Naive thymus-derived CD4-positive, alpha-beta T cell (primary cell): ENCODE measurements at regions of chr3 and their contacts with region 1.

Region 1: GRCh38 chr3:122514123-122515019 is at the start of gene KPNA1:
- DNase-seq: peak; percentile 81 to 92 (median 90)
- ATAC-seq: peak; percentile 92
- H3K4me3 ChIP-seq: peak within 1 kb of the TSS; percentile 80
- H3K4me3 Mint-ChIP-seq: peak within 1 kb of the TSS; percentile 77 to 100 (median 92)
- H3K27ac ChIP-seq: peak within 1 kb of the TSS; percentile 100
- H3K27ac Mint-ChIP-seq: peak within 1 kb of the TSS; percentile 78 to 97 (median 91)
- H3K4me1 ChIP-seq: peaks cover 6 to 21% of the 10 kb centered on the region in 2 donors
- H3K4me1 Mint-ChIP-seq: peaks cover 35 to 52% (median 46%) of the 10 kb centered on the region in 7 donors
- H3K27me3 ChIP-seq: no peaks in the 10 kb centered on the region
- H3K27me3 Mint-ChIP-seq: no peaks in the 10 kb centered on the region
- total RNA-seq, gene KPNA1: 50.6 to 70.2 (median 54.3) TPM

Region 2: DNA sequence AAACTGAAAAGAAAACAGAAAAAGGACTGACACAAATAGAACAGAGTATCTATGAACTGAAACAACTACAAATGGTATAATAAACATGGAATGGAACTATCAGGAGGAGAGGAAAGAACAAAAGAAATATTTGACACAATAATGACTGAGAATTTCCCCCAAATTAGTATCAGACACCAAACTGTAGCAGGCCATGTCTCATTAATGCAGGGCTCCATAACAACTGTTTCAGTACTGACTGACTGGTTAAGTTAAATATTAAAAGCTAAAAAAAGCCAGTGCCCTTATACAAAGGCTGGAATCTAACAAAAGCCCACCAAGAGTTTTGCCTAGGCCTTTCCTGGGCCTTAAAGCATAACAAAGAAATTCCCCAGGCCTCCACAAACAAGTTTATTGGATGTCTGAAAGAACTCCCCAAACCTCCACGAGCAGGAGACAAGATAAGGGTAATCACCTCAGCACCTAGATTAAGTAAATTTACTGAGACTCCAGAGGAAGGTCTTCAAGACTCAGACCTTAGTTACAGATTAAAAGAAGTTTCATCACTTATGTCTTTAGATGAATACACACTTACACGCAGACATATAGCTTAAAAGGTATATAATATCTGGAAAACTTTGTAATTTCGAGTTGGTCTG is 45.4 kb before region 1 on chr3:
- CTCF ChIA-PET with region 1: no interaction called
- POLR2A ChIA-PET with region 1: no interaction called
- intact Hi-C with region 1: loop called in 1 of 2 experiments (anchors 10 kb)
- DNase-seq: no peak
- ATAC-seq: no peak
- H3K4me3 ChIP-seq: no peak overlapping the region
- H3K4me3 Mint-ChIP-seq: peak overlapping the region in 6 of 10 donors; percentile 22 to 55 (median 42)
- H3K27ac ChIP-seq: no peak overlapping the region
- H3K27ac Mint-ChIP-seq: peak overlapping the region in 7 of 9 donors; percentile 18 to 89 (median 56)
- H3K4me1 ChIP-seq: peaks cover 7 to 25% of the 10 kb centered on the region in 2 donors
- H3K4me1 Mint-ChIP-seq: peaks cover 31 to 68% (median 63%) of the 10 kb centered on the region in 7 donors
- H3K27me3 ChIP-seq: no peaks in the 10 kb centered on the region
- H3K27me3 Mint-ChIP-seq: no peaks in the 10 kb centered on the region

Region 3: DNA sequence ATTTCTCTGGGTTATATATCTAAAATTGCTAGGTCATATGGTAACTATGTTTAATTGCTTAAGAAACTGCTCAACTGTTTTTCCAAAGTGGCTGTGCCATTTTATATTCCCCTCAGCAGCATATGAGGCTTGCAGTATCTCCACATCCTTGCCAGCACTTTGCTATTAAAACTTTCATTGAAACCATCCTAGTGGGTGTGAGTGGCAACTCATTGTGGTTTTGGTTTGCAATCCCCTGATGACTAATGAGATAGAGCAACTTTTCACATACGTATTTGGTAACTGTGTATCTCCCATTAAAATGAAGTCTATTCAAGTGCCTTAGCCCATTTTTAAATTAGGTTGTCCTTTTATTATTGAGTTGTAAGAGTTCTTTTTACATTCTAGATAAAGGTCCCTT is 16.9 kb before region 1 on chr3:
- CTCF ChIA-PET with region 1: no interaction called
- POLR2A ChIA-PET with region 1: interaction called, 5 read pairs
- intact Hi-C with region 1: loop called (anchors 2 kb)
- DNase-seq: peak in 1 of 9 donors; percentile 40
- ATAC-seq: peak; percentile 90
- H3K4me3 ChIP-seq: no peak overlapping the region
- H3K4me3 Mint-ChIP-seq: no peak overlapping the region
- H3K27ac ChIP-seq: no peak overlapping the region
- H3K27ac Mint-ChIP-seq: peak overlapping the region in 1 of 9 donors; percentile 13
- H3K4me1 ChIP-seq: peaks cover 8 to 22% of the 10 kb centered on the region in 2 donors
- H3K4me1 Mint-ChIP-seq: peaks cover 22 to 69% (median 49%) of the 10 kb centered on the region in 7 donors
- H3K27me3 ChIP-seq: no peaks in the 10 kb centered on the region
- H3K27me3 Mint-ChIP-seq: no peaks in the 10 kb centered on the region

Region 4: DNA sequence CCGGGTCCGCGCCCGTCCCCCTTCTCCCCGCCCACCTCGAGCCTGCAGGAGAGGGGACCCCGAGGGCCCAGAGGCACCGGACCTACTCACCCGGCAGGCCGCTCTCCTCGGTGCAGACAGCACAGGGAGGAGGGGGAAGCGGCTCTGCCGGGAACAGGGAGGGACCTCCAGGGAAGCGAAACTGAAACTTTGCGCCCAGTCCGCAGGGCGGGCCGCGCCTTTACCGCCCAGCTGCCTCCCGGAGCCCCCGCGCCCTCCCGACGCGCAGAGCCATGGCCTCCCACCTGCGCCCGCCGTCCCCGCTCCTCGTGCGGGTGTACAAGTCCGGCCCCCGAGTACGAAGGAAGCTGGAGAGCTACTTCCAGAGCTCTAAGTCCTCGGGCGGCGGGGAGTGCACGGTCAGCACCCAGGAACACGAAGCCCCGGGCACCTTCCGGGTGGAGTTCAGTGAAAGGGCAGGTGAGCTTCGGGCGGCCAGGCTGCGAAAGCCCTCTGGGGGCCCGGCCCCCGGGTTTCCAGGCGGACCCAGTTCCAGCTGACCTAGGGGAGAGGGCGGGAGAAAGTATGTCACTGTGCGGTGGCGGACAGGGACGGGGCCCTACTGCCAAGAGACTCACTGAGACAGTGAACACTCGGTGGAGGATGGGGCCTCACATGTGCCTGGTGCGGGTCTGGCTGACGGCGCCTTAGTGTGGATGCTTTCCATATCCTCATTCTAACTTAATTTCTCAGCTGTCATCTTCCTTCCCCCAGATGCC is 50.0 kb after region 1 on chr3 and contains the starts of genes DTX3L and PARP9:
- CTCF ChIA-PET with region 1: no interaction called
- POLR2A ChIA-PET with region 1: interaction called, 5 read pairs
- intact Hi-C with region 1: loop called (anchors 2 kb)
- DNase-seq: peak; percentile 50 to 82 (median 77)
- ATAC-seq: peak; percentile 95
- H3K4me3 ChIP-seq: peak within 1 kb of the TSS; percentile 75
- H3K4me3 Mint-ChIP-seq: peak within 1 kb of the TSS; percentile 88 to 100 (median 98)
- H3K27ac ChIP-seq: peak within 1 kb of the TSS; percentile 98
- H3K27ac Mint-ChIP-seq: peak within 1 kb of the TSS; percentile 97 to 99 (median 98)
- H3K4me1 ChIP-seq: peaks cover 34 to 45% of the 10 kb centered on the region in 2 donors
- H3K4me1 Mint-ChIP-seq: peaks cover 58 to 91% (median 79%) of the 10 kb centered on the region in 7 donors
- H3K27me3 ChIP-seq: no peaks in the 10 kb centered on the region
- H3K27me3 Mint-ChIP-seq: no peaks in the 10 kb centered on the region
- total RNA-seq, gene DTX3L: 28.6 to 164 (median 35.8) TPM
- total RNA-seq, gene PARP9: 17.6 to 165 (median 24.4) TPM

Region 5: DNA sequence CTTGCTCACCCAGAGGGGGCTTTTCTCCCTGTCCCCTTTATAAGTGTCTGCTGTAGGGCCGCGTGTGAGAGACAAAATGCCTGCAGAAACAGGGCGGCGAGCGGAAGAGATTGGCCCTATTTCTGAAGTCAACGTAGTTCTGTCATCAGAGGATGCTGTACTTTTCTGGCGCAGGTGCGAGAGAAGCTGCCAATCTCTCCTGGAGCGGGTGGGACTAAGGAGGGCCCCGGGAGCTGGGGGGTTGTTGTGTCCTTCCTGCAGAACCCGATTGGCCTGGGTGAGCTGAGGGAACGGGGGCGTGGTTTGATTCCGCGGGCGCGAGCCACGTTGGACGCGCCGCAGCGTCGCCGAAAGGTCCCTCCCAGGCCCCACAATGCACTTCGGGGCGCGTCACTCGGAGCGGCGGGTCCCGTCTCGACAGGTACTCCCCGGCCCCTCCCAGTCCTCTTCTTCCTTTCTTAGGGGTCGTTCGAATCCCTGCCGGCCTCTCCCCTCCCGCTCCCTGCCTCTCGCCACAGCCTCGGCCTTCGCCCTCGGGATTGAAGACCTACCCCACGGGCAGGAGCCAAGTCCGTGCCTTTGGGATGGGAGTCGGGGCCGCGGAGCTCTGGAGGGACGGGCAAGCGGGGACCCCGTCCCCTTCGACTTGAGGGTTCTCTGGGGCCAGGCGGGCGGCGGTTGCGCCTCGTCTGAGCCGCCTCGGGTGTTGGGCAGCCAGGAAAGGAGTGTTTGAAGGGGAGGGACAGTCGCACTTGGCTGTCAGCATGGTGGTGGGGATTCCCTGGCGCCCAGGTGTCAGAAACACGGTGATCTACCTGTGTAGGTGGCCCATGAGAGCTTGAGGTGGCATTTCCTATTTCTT is 687.4 kb after region 1 on chr3 and contains the start of gene SEC22A:
- CTCF ChIA-PET with region 1: no interaction called
- POLR2A ChIA-PET with region 1: interaction called, 5 read pairs
- intact Hi-C with region 1: loop called in 1 of 2 experiments (anchors 10 kb)
- DNase-seq: peak; percentile 89 to 99 (median 97)
- ATAC-seq: peak; percentile 97
- H3K4me3 ChIP-seq: peak within 1 kb of the TSS; percentile 90
- H3K4me3 Mint-ChIP-seq: peak within 1 kb of the TSS; percentile 82 to 98 (median 92)
- H3K27ac ChIP-seq: peak within 1 kb of the TSS; percentile 99
- H3K27ac Mint-ChIP-seq: peak within 1 kb of the TSS; percentile 97 to 100 (median 99)
- H3K4me1 ChIP-seq: peaks cover 12% of the 10 kb centered on the region in 2 donors
- H3K4me1 Mint-ChIP-seq: peaks cover 13 to 41% (median 31%) of the 10 kb centered on the region in 7 donors
- H3K27me3 ChIP-seq: no peaks in the 10 kb centered on the region
- H3K27me3 Mint-ChIP-seq: peaks cover 0 to 9% (median 2%) of the 10 kb centered on the region in 5 donors
- total RNA-seq, gene SEC22A: 15.0 to 20.1 (median 17.1) TPM